ENCODE measurements at regions of chr9 and their contacts with region 1.

Region 1: GRCh38 chr9:97615439-97616072 is 17.6 kb downstream of the TSTD2 start:
- DNase-seq: peak; percentile 72
- ATAC-seq: peak; percentile 39
- H3K4me3 Mint-ChIP-seq: no peak overlapping the region
- H3K27ac Mint-ChIP-seq: no peak overlapping the region
- H3K4me1 Mint-ChIP-seq: peaks cover 15% of the 10 kb centered on the region
- H3K27me3 Mint-ChIP-seq: no peaks in the 10 kb centered on the region

Region 2: DNA sequence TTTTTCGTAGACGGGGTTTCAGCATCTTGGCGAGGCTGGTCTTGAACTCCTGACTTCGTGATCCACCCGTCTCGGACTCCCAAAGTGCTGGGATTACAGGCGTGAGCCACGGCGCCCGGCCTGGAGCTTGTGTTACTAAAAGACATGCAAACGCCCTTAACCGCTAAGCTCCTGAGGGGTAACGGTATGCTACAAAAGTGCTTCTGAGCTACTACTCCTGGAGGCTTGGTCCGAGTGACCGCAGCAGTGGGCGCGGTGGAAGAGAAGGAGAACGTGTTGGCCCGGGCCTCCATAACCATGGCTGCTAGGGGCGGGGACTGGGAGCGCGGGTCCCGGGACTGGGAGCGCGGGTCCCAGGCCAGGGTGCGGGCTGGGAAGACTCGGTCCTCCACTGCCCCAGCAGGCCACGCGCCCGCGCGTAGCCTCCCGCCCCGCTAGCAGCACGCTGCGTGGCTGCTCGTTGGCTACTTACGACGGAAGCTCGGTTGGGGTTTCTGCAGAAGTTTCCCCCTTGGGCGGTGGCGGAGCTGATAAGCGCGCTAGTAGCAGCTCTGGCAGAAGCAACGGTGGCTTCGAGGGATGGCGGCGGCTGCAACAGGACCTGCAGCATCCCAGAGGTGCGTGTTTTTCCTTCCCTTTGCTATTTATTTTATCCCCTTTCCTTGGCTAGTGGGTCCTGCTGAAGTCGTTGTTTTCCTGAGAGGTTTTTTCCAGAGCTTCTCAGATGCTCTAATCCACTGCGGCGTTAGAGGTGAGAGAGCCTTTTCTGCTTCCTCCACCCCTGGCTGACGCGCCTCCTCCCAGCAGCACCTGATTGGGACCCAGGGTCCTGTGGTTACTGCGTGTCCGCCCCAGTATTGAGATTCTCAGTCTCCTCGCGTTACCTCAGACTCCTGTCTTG is 377.4 kb before region 1 on chr9:
- CTCF ChIA-PET with region 1: no interaction called
- POLR2A ChIA-PET with region 1: no interaction called
- intact Hi-C with region 1: loop called in 1 of 2 experiments (anchors 5 kb)
- DNase-seq: peak; percentile 91
- ATAC-seq: peak; percentile 95
- H3K4me3 Mint-ChIP-seq: peak overlapping the region; percentile 93
- H3K27ac Mint-ChIP-seq: peak overlapping the region; percentile 97
- H3K4me1 Mint-ChIP-seq: peaks cover 12% of the 10 kb centered on the region
- H3K27me3 Mint-ChIP-seq: no peaks in the 10 kb centered on the region

Region 3: GRCh38 chr9:97386733-97387503 is 228.6 kb before region 1 on chr9:
- CTCF ChIA-PET with region 1: interaction called, 10 read pairs
- POLR2A ChIA-PET with region 1: no interaction called
- intact Hi-C with region 1: loop called (anchors 1 to 5 kb)
- DNase-seq: peak; percentile 86
- ATAC-seq: peak; percentile 55
- H3K4me3 Mint-ChIP-seq: no peak overlapping the region
- H3K27ac Mint-ChIP-seq: no peak overlapping the region
- H3K4me1 Mint-ChIP-seq: peaks cover 14% of the 10 kb centered on the region
- H3K27me3 Mint-ChIP-seq: peaks cover 16% of the 10 kb centered on the region

Region 4: GRCh38 chr9:97468658-97469448 is 146.7 kb before region 1 on chr9:
- CTCF ChIA-PET with region 1: interaction called, 51 read pairs
- POLR2A ChIA-PET with region 1: no interaction called
- intact Hi-C with region 1: loop called (anchors 1 kb)
- DNase-seq: peak; percentile 66
- ATAC-seq: peak; percentile 74
- H3K4me3 Mint-ChIP-seq: no peak overlapping the region
- H3K27ac Mint-ChIP-seq: no peak overlapping the region
- H3K4me1 Mint-ChIP-seq: no peaks in the 10 kb centered on the region
- H3K27me3 Mint-ChIP-seq: no peaks in the 10 kb centered on the region

Region 5: GRCh38 chr9:97501177-97501971 is 114.2 kb before region 1 on chr9 and contains the start of gene TMOD1:
- CTCF ChIA-PET with region 1: interaction called, 10 read pairs
- POLR2A ChIA-PET with region 1: no interaction called
- intact Hi-C with region 1: no loop called
- DNase-seq: peak; percentile 66
- ATAC-seq: peak; percentile 67
- H3K4me3 Mint-ChIP-seq: peak within 1 kb of the TSS; percentile 64
- H3K27ac Mint-ChIP-seq: no peak within 1 kb of the TSS
- H3K4me1 Mint-ChIP-seq: peaks cover 15% of the 10 kb centered on the region
- H3K27me3 Mint-ChIP-seq: peaks cover 45% of the 10 kb centered on the region
- total RNA-seq, gene TMOD1: 1.3 to 1.5 TPM

Region 6: GRCh38 chr9:97598461-97599288 is 16.9 kb before region 1 on chr9:
- CTCF ChIA-PET with region 1: interaction called, 74 read pairs
- POLR2A ChIA-PET with region 1: no interaction called
- intact Hi-C with region 1: no loop called
- DNase-seq: peak; percentile 85
- ATAC-seq: peak; percentile 99
- H3K4me3 Mint-ChIP-seq: no peak overlapping the region
- H3K27ac Mint-ChIP-seq: peak overlapping the region; percentile 66
- H3K4me1 Mint-ChIP-seq: peaks cover 7% of the 10 kb centered on the region
- H3K27me3 Mint-ChIP-seq: no peaks in the 10 kb centered on the region